Natural killer cell (primary cell): ENCODE measurements at regions of chr19 and their contacts with region 1.

Region 1: GRCh38 chr19:12847159-12848139 is 9.1 kb downstream of the MAST1 start:
- DNase-seq: peak; percentile 85 to 88
- ATAC-seq: peak; percentile 96 to 99 (median 98)
- H3K4me3 ChIP-seq: no peak overlapping the region
- H3K4me3 Mint-ChIP-seq: no peak overlapping the region
- H3K27ac ChIP-seq: no peak overlapping the region
- H3K27ac Mint-ChIP-seq: peak overlapping the region in 1 of 2 donors; percentile 69
- H3K4me1 ChIP-seq: peaks cover 11% of the 10 kb centered on the region
- H3K4me1 Mint-ChIP-seq: peaks cover 6 to 7% of the 10 kb centered on the region in 2 donors
- H3K27me3 ChIP-seq: peaks cover 13% of the 10 kb centered on the region
- H3K27me3 Mint-ChIP-seq: peaks cover 7 to 12% of the 10 kb centered on the region in 2 donors
- CTCF ChIP-seq: peak; percentile 100

Region 2: GRCh38 chr19:12564016-12564664 is 283.3 kb before region 1 on chr19:
- intact Hi-C with region 1: loop called (anchors 2 kb)
- DNase-seq: peak; percentile 87 to 93
- ATAC-seq: peak; percentile 94 to 100 (median 99)
- H3K4me3 ChIP-seq: no peak overlapping the region
- H3K4me3 Mint-ChIP-seq: no peak overlapping the region
- H3K27ac ChIP-seq: no peak overlapping the region
- H3K27ac Mint-ChIP-seq: no peak overlapping the region
- H3K4me1 ChIP-seq: peaks cover 5% of the 10 kb centered on the region
- H3K4me1 Mint-ChIP-seq: peaks cover 4 to 5% of the 10 kb centered on the region in 2 donors
- H3K27me3 ChIP-seq: no peaks in the 10 kb centered on the region
- H3K27me3 Mint-ChIP-seq: no peaks in the 10 kb centered on the region
- CTCF ChIP-seq: peak; percentile 94

Region 3: DNA sequence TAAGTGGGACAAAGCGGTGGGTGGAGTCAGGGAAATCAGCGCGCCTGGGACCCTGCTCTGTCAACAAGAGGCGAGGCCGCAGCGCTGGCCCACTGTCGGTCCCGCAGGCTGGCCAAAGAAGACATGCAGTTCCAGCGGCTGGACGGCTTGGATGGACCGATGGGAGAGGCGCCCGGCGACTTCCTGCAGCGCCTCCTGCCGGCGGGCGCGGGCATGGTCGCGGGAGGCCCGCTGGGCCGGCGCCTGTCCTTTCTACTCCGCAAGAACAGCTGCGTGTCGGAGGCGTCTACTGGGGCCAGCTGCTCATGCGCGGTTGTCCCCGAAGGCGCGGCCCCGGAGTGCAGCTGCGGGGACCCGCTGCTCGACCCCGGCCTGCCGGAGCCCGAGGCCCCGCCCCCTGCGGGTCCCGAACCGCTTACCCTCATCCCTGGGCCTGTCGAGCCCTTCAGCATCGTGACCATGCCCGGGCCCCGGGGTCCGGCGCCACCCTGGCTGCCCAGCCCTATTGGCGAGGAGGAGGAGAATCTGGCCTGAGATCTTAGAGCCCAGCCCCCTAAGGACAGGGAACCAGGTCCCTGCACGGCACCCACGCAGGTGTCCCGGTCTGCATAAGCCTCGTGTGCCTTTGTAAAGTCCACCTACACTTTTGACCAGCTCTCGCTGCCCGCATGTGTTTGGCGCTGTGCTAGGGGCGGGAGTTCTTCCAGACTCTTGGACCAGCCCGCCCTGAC is 89.7 kb before region 1 on chr19:
- intact Hi-C with region 1: loop called (anchors 1 kb)
- DNase-seq: peak; percentile 70 to 77
- ATAC-seq: peak; percentile 80 to 83 (median 82)
- H3K4me3 ChIP-seq: no peak overlapping the region
- H3K4me3 Mint-ChIP-seq: no peak overlapping the region
- H3K27ac ChIP-seq: no peak overlapping the region
- H3K27ac Mint-ChIP-seq: no peak overlapping the region
- H3K4me1 ChIP-seq: peaks cover 9% of the 10 kb centered on the region
- H3K4me1 Mint-ChIP-seq: peaks cover 0 to 5% of the 10 kb centered on the region in 2 donors
- H3K27me3 ChIP-seq: peaks cover 2% of the 10 kb centered on the region
- H3K27me3 Mint-ChIP-seq: peaks cover 0 to 9% of the 10 kb centered on the region in 2 donors
- CTCF ChIP-seq: peak; percentile 83

Region 4: GRCh38 chr19:12766051-12766521 is 81.4 kb before region 1 on chr19:
- intact Hi-C with region 1: loop called (anchors 1 kb)
- DNase-seq: peak; percentile 80 to 88
- ATAC-seq: peak; percentile 80 to 98 (median 94)
- H3K4me3 ChIP-seq: no peak overlapping the region
- H3K4me3 Mint-ChIP-seq: no peak overlapping the region
- H3K27ac ChIP-seq: no peak overlapping the region
- H3K27ac Mint-ChIP-seq: no peak overlapping the region
- H3K4me1 ChIP-seq: peaks cover 6% of the 10 kb centered on the region
- H3K4me1 Mint-ChIP-seq: peaks cover 0 to 6% of the 10 kb centered on the region in 2 donors
- H3K27me3 ChIP-seq: no peaks in the 10 kb centered on the region
- H3K27me3 Mint-ChIP-seq: no peaks in the 10 kb centered on the region
- CTCF ChIP-seq: peak; percentile 92

Region 5: GRCh38 chr19:12825254-12826131 is 22.0 kb before region 1 on chr19:
- intact Hi-C with region 1: no loop called
- DNase-seq: peak in 1 of 2 donors; percentile 41
- ATAC-seq: peak in 1 of 3 donors; percentile 54
- H3K4me3 ChIP-seq: no peak overlapping the region
- H3K4me3 Mint-ChIP-seq: no peak overlapping the region
- H3K27ac ChIP-seq: no peak overlapping the region
- H3K27ac Mint-ChIP-seq: no peak overlapping the region
- H3K4me1 ChIP-seq: peaks cover 10% of the 10 kb centered on the region
- H3K4me1 Mint-ChIP-seq: peaks cover 10% of the 10 kb centered on the region in 2 donors
- H3K27me3 ChIP-seq: peaks cover 36% of the 10 kb centered on the region
- H3K27me3 Mint-ChIP-seq: peaks cover 29 to 36% of the 10 kb centered on the region in 2 donors
- CTCF ChIP-seq: peak; percentile 32